Psoas muscle (tissue), 8 donors: ENCODE measurements at regions of chr11 and their contacts with region 1.

Region 1: DNA sequence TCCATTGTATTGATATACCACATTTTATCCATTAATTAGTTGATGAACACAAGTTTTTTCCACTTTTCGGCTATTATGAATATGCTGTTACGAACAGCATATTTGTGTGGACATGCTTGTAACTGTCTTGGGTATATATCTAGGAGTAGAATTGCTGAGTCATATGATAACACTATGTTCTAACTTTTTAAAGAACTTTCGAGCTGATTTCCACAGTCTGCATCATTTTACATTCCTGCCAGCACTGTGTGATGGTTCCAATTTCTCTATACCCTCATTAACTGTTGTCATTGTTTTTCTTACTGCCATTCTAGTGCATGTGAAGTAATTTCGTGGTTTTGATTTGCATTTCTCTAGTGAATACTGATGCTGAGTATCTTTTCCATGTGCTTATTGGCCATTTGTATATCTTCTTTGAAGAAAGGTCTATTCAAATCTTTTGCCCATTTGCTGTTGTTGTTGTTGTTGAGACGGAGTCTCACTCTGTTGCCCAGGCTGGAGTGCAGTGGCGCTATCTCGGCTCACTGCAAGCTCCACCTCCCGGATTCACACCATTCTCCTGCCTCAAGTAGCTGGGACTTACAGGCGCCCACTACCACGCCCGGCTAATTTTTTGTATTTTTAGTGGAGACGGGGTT is 7.4 kb upstream of the RCE1 start:
- DNase-seq: no peak
- ATAC-seq: no peak
- H3K4me3 ChIP-seq: no peak overlapping the region
- H3K27ac ChIP-seq: no peak overlapping the region
- H3K4me1 ChIP-seq: no peaks in the 10 kb centered on the region
- H3K27me3 ChIP-seq: no peaks in the 10 kb centered on the region
- CTCF ChIP-seq: no peak

Region 2: GRCh38 chr11:66579017-66579606 is 256.8 kb before region 1 on chr11:
- intact Hi-C with region 1: loop called in 1 of 2 experiments (anchors 5 kb)
- DNase-seq: peak; percentile 83 to 86
- ATAC-seq: peak; percentile 74 to 95 (median 92)
- H3K4me3 ChIP-seq: no peak overlapping the region
- H3K27ac ChIP-seq: no peak overlapping the region
- H3K4me1 ChIP-seq: no peaks in the 10 kb centered on the region
- H3K27me3 ChIP-seq: no peaks in the 10 kb centered on the region
- CTCF ChIP-seq: peak; percentile 75

Region 3: GRCh38 chr11:66592457-66593302 is 243.2 kb before region 1 on chr11 and contains the starts of genes CCDC87 and CCS:
- intact Hi-C with region 1: loop called in 1 of 2 experiments (anchors 5 kb)
- DNase-seq: peak; percentile 98 to 99
- ATAC-seq: peak; percentile 98 to 99 (median 98)
- H3K4me3 ChIP-seq: peak within 1 kb of the TSS; percentile 92
- H3K27ac ChIP-seq: peak within 1 kb of the TSS; percentile 84
- H3K4me1 ChIP-seq: peaks cover 15% of the 10 kb centered on the region
- H3K27me3 ChIP-seq: no peaks in the 10 kb centered on the region
- CTCF ChIP-seq: peak; percentile 66
- total RNA-seq, gene CCDC87: 0.36 to 0.46 (median 0.36) TPM in 3 of 4 donors, not detected in the other
- total RNA-seq, gene CCS: 10.5 to 17.0 (median 14.8) TPM

Region 4: DNA sequence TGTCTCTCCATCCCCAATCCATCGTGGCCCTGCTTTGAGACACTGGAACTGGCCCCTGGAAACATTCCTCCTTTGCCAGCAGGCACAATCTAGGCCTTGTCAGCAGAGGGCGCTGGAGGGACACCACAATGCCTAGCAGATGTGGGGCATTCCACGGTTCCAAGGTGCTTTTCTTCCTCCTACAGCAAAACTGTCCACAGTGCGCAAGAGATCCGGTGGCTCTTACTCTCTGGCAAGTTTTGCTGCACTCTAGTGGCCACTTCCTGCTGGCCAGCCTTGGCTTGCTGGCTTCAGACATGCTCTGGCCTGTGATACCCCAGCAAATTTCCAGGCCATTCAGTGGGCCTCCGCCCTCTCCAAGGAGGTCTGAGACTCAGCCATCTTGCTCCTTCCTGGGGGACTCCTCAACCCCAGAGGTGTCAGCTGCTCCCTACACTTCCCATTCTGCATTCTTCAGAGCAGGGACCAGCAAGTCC is 141.1 kb before region 1 on chr11:
- intact Hi-C with region 1: loop called (anchors 1 to 2 kb)
- DNase-seq: peak; percentile 84 to 91
- ATAC-seq: peak; percentile 88 to 94 (median 93)
- H3K4me3 ChIP-seq: no peak overlapping the region
- H3K27ac ChIP-seq: no peak overlapping the region
- H3K4me1 ChIP-seq: no peaks in the 10 kb centered on the region
- H3K27me3 ChIP-seq: no peaks in the 10 kb centered on the region
- CTCF ChIP-seq: peak; percentile 90

Region 5: GRCh38 chr11:66704726-66705360 is 131.0 kb before region 1 on chr11:
- intact Hi-C with region 1: no loop called
- DNase-seq: no peak
- ATAC-seq: no peak
- H3K4me3 ChIP-seq: no peak overlapping the region
- H3K27ac ChIP-seq: no peak overlapping the region
- H3K4me1 ChIP-seq: no peaks in the 10 kb centered on the region
- H3K27me3 ChIP-seq: no peaks in the 10 kb centered on the region
- CTCF ChIP-seq: no peak

Region 6: GRCh38 chr11:66958232-66958955 is 122.5 kb after region 1 on chr11 and contains the start of gene PC:
- intact Hi-C with region 1: no loop called
- DNase-seq: peak; percentile 100
- ATAC-seq: peak; percentile 97 to 99 (median 98)
- H3K4me3 ChIP-seq: peak within 1 kb of the TSS; percentile 67
- H3K27ac ChIP-seq: peak within 1 kb of the TSS; percentile 85
- H3K4me1 ChIP-seq: peaks cover 8% of the 10 kb centered on the region
- H3K27me3 ChIP-seq: no peaks in the 10 kb centered on the region
- CTCF ChIP-seq: no peak
- total RNA-seq, gene PC: 16.7 to 33.0 (median 25.3) TPM